GM18951 (cell line): ENCODE measurements at regions of chr6 and their contacts with region 1.

Region 1: DNA sequence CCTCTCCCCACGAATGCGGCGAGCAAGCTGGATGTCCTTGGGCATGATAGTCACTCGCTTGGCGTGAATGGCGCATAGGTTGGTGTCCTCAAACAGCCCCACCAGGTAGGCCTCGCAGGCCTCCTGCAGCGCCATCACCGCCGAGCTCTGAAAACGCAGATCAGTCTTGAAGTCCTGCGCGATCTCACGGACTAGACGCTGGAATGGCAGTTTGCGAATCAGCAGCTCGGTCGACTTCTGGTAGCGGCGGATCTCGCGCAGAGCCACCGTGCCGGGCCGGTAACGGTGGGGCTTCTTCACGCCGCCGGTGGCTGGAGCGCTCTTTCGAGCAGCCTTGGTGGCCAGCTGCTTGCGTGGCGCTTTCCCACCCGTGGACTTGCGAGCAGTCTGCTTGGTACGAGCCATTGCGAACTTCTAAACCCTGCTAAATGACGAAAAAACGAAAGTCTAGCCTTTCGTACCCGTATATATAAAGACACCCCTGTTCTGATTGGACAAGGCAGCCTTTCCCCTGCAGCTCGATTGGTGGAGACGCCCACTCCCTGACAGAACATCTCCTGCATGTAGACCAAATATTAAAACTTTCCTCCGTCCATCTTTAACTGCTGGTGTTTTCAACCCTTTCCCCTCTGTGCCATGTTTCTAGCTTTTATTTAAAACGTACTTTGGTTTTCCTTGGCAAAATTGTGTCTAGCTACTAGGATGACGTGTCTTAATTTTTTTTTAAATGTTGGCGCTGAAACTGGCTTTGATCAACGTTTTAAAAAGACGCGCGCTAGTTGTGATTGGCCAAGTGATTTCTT is 109.8 kb downstream of the HFE start:
- POLR2A ChIP-seq: peak; percentile 100

Region 2: DNA sequence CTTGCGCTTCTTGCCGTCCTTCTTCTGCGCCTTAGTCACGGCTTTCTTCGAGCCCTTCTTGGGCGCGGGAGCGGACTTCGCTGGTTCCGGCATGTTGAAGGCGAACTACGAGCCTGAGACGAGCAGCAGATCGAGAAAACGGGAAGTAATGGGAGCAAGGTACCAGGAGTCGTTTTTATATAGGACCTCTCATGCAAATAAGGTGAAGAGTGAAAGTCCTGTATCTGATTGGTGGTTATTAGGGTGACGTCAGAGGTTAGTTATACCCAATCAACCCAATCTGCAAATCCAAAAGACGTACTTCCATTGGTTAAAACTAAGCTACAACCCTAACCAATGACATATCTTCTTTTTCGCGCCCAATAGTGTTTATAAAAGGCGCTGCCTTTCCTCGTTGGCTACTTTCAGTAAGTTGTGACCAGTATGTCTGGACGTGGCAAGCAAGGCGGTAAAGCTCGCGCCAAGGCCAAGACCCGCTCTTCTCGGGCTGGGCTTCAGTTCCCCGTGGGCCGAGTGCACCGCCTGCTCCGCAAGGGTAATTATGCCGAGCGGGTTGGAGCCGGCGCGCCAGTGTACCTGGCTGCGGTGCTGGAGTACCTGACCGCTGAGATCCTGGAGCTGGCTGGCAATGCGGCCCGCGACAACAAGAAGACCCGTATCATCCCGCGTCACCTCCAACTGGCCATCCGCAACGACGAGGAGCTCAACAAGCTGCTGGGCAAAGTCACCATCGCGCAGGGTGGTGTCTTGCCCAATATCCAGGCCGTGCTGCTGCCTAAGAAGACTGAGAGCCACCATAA is 949.9 kb after region 1 on chr6:
- in situ Hi-C with region 1: loop called (anchors 10 kb)
- POLR2A ChIP-seq: peak; percentile 98